PC-9 (cell line): ENCODE measurements at regions of chr4 and their contacts with region 1.

Region 1: GRCh38 chr4:38948551-38948950 is 80.9 kb downstream of the FAM114A1 start:
- DNase-seq: peak; percentile 38 to 87
- H3K4me3 ChIP-seq: no peak overlapping the region
- H3K27ac ChIP-seq: peak overlapping the region; percentile 75
- H3K4me1 ChIP-seq: peaks cover 23% of the 10 kb centered on the region
- H3K27me3 ChIP-seq: no peaks in the 10 kb centered on the region
- CTCF ChIP-seq: no peak

Region 2: DNA sequence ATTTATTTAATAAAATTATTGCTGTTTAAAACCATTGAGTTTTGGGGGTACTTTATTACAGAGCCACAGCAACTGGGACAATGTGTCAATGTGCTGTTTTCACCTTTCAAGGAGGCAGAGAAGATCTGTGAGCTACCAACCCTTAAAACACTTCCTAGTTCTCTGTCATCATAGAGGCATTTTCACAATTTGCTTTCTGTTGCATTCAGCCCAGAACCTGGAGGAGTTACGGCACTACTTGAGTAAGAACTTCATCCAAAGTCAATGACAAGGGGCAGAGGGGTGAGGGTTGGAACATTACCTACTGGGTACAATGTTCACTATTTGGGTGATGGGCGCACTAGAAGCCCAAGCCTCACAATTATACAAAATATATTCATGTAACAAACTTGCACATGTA is 48.5 kb after region 1 on chr4:
- CTCF ChIA-PET with region 1: no interaction called
- POLR2A ChIA-PET with region 1: no interaction called
- intact Hi-C with region 1: no loop called
- DNase-seq: no peak
- H3K4me3 ChIP-seq: no peak overlapping the region
- H3K27ac ChIP-seq: no peak overlapping the region
- H3K4me1 ChIP-seq: no peaks in the 10 kb centered on the region
- H3K27me3 ChIP-seq: no peaks in the 10 kb centered on the region
- CTCF ChIP-seq: no peak

Region 3: GRCh38 chr4:39032218-39033085 is 83.9 kb after region 1 on chr4 and contains the start of gene TMEM156:
- CTCF ChIA-PET with region 1: no interaction called
- POLR2A ChIA-PET with region 1: interaction called, 3 read pairs
- intact Hi-C with region 1: loop called (anchors 2 kb)
- DNase-seq: peak; percentile 26 to 93
- H3K4me3 ChIP-seq: peak within 1 kb of the TSS; percentile 71
- H3K27ac ChIP-seq: peak within 1 kb of the TSS; percentile 98
- H3K4me1 ChIP-seq: peaks cover 68% of the 10 kb centered on the region
- H3K27me3 ChIP-seq: no peaks in the 10 kb centered on the region
- CTCF ChIP-seq: no peak
- total RNA-seq, gene TMEM156: 20.1 and 29.3 TPM in 2 replicates